ENCODE measurements at regions of chr22 and their contacts with region 1.

Region 1: DNA sequence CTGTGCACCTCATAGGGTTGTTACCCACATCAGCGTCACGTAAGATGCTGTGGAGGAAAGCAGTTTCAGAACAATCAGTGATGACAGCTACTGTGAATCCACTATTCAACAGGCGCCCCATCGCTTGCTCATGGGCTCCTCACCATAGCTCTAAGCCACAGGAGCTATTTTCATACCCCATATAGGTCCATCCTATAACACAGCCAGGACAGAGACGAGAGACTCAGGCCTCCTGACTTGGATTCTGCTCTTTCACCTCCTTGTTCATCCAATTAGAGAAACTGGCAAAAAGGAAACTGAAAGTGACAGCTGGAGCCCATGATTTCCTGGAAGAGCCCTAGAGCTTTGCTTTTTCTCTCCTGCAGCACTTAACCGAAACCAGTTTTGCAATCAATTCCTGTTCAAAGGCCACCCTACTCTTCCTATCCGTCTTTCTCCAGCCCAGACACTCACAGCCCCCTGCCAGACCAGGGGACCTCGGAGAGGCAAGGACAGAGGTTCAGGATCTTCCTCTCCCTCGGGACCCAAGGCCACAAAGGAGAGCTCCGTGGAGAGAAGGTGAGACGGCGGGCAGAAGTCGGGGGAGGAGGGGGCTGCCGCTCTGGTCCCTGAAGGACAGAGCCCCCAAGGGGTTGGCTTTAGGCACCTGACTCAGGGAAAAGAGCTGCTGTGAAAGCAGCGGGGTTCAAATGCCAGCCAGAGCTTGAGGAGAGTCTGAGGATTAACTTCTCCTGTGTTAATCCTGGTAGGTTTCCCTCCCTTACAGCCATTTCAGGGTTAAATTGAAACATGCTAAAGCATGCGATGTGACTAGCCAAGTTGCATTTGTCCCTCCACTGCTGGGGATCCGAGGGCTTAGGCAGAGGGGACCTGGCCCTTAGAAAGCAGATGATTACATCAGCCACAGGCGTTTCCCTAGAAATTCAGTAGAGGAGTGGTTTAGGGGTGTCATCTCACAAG is at the start of gene APOL6:
- DNase-seq: peak; percentile 74
- H3K4me3 Mint-ChIP-seq: peak within 1 kb of the TSS; percentile 100
- H3K27ac Mint-ChIP-seq: peak within 1 kb of the TSS; percentile 100
- H3K4me1 Mint-ChIP-seq: peaks cover 40% of the 10 kb centered on the region
- H3K27me3 Mint-ChIP-seq: no peaks in the 10 kb centered on the region
- total RNA-seq, gene APOL6: 72.4 to 75.6 TPM

Region 2: DNA sequence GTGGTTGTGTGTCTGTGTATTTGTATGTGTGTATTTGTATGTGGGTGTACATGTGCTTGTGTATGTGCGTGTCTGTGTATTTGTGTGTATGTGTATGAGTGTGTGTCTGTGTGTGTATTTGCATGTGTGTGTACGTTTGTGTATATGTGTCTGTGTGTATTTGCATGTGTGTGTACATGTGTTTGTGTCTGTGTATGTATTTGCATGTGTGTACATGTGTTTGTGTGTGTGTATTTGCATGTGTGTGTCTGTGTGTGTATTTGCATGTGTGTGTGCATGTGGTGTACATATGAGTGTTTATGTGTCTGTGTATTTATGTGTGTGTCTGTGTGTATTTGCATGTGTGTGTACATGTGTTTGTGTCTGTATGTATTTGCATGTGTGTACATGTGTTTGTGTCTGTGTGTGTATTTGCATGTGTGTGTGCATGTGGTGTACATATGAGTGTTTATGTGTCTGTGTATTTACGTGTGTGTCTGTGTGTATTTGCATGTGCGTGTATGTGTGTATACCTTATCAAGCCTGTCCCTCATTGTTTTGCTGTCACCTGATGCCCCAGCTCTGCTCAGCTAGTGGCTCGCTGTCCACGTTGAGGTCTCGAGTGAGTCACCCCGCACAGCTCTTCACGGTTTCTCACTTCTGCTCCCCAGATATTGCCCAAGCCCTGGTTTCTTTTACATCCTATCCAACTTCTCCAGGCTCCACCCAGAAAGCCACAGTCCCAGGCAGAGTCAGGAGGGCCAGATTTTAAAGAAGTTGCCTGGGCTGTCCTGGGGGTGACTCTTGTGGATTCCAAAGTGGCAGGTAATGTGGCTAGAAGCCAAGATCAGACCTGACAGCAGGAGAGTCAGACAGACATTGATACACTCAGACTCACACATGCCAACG is 46.4 kb before region 1 on chr22:
- CTCF ChIA-PET with region 1: no interaction called
- POLR2A ChIA-PET with region 1: no interaction called
- DNase-seq: no peak
- H3K4me3 Mint-ChIP-seq: no peak overlapping the region
- H3K27ac Mint-ChIP-seq: no peak overlapping the region
- H3K4me1 Mint-ChIP-seq: peaks cover 8% of the 10 kb centered on the region
- H3K27me3 Mint-ChIP-seq: no peaks in the 10 kb centered on the region

Region 3: DNA sequence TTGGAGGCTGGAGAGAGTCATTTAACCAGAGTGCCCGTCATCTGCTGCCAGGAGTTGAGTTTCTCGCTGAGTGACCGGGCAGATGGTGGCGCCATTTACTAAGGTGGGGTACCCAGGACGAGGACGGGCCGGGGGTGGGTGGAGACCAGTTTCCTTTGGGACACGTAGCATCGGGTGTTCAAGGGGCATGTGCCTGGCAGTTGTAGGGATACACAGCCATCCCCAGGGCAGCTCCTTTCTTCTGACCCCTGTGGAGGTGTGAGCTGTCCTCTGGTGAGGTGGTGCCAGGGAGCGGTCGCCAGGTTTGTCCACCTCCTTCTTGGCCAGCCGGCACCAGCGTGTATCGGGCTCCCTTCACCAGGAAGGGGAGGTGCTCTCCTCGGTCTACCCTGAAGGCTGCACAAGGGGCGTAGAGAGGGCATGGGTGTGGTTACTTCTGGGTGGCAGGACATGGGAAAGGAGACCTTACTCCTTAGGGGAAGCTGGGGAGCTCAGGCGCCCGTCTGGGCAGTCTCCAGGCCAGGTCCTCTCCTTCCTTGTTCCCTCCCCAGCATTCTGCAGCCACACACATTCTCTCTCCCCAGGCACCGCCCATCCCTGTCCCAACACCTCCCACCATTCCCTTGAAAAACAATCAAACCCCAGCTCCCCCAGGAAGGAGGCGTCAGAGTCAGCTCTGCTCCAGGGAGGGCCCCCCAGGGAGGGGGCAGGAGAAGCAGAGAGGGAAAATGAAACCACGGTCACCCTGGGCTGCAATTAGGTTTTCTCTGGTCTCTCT is 20.9 kb before region 1 on chr22:
- CTCF ChIA-PET with region 1: interaction called, 6 read pairs
- POLR2A ChIA-PET with region 1: interaction called, 26 read pairs
- DNase-seq: peak; percentile 63
- H3K4me3 Mint-ChIP-seq: peak overlapping the region; percentile 64
- H3K27ac Mint-ChIP-seq: peak overlapping the region; percentile 19
- H3K4me1 Mint-ChIP-seq: peaks cover 34% of the 10 kb centered on the region
- H3K27me3 Mint-ChIP-seq: peaks cover 16% of the 10 kb centered on the region

Region 4: GRCh38 chr22:35634015-35634414 is 14.3 kb before region 1 on chr22:
- CTCF ChIA-PET with region 1: interaction called, 3 read pairs
- POLR2A ChIA-PET with region 1: interaction called, 26 read pairs
- DNase-seq: no peak
- H3K4me3 Mint-ChIP-seq: no peak overlapping the region
- H3K27ac Mint-ChIP-seq: no peak overlapping the region
- H3K4me1 Mint-ChIP-seq: peaks cover 36% of the 10 kb centered on the region
- H3K27me3 Mint-ChIP-seq: peaks cover 6% of the 10 kb centered on the region

Region 5: GRCh38 chr22:35660291-35661127 is 12.2 kb after region 1 on chr22:
- CTCF ChIA-PET with region 1: interaction called, 6 read pairs
- POLR2A ChIA-PET with region 1: interaction called, 92 read pairs
- DNase-seq: peak; percentile 63
- H3K4me3 Mint-ChIP-seq: no peak overlapping the region
- H3K27ac Mint-ChIP-seq: peak overlapping the region; percentile 92
- H3K4me1 Mint-ChIP-seq: peaks cover 65% of the 10 kb centered on the region
- H3K27me3 Mint-ChIP-seq: no peaks in the 10 kb centered on the region

Region 6: DNA sequence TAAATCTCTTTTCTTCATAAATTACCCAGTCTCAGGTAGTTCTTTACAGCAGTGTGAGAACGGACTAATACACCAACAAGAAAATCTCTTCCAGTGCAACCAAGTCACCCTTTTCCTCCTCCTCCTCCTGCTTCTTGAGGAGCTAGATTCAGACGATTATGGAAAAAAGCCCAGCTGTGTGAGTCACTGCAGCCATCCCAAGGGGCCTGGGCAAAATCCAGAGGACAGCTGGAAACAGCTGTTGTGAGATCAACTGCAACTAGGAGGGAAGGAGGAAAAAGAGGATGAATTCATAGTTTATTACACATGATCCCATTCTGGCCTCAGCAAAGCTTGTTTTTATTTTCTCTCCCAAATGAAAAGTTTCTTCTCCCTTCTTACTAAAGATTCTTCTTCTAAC is 347.4 kb after region 1 on chr22:
- CTCF ChIA-PET with region 1: no interaction called
- POLR2A ChIA-PET with region 1: no interaction called
- DNase-seq: no peak
- H3K4me3 Mint-ChIP-seq: no peak overlapping the region
- H3K27ac Mint-ChIP-seq: no peak overlapping the region
- H3K4me1 Mint-ChIP-seq: no peaks in the 10 kb centered on the region
- H3K27me3 Mint-ChIP-seq: peaks cover 16% of the 10 kb centered on the region

Region 7: GRCh38 chr22:36156515-36157419 is 508.4 kb after region 1 on chr22:
- CTCF ChIA-PET with region 1: no interaction called
- POLR2A ChIA-PET with region 1: interaction called, 19 read pairs
- DNase-seq: peak; percentile 70
- H3K4me3 Mint-ChIP-seq: peak overlapping the region; percentile 95
- H3K27ac Mint-ChIP-seq: peak overlapping the region; percentile 91
- H3K4me1 Mint-ChIP-seq: peaks cover 87% of the 10 kb centered on the region
- H3K27me3 Mint-ChIP-seq: no peaks in the 10 kb centered on the region